Activated CD8-positive, alpha-beta T cell treated with anti-CD3 and anti-CD28 coated beads for 36 hours (primary cell): ENCODE measurements at regions of chr3 and their contacts with region 1.

Region 1: DNA sequence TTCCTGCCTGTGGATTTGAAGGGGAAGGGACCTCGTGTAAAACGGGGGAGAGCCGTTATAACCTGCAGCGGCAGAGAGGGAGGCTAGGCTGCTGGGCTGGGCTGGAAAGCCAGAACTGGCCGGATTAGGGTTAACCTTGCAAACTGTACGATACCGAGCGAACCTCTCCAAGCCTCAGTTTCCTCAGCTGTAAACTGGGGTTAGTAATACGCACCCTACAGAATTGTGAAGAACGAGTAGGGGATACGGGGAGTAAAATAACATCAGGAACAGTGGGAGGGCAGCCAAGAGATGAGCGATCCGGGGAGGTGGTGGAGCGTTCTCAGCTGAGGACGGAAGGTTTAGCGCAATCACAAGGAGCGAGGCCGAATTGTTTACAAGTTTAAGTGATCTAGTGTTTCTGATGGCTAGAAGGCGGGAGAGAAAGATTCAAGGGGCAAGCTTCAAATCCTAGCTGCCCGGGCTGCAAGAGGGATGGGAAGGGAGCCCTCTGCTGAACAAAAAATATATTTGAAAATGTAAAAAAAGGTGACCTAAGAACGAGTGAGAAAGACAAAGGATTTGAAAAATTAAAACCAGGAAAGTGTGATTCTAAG is 768 bp upstream of the SEMA5B start:
- DNase-seq: peak; percentile 30
- ATAC-seq: peak; percentile 52
- H3K4me3 Mint-ChIP-seq: peak overlapping the region; percentile 56
- H3K27ac Mint-ChIP-seq: no peak overlapping the region
- H3K4me1 Mint-ChIP-seq: peaks cover 13% of the 10 kb centered on the region
- H3K27me3 Mint-ChIP-seq: peaks cover 58% of the 10 kb centered on the region
- CTCF ChIP-seq: peak; percentile 58

Region 2: GRCh38 chr3:122572940-122573412 is 455.4 kb before region 1 on chr3:
- CTCF ChIA-PET with region 1: no interaction called
- POLR2A ChIA-PET with region 1: no interaction called
- intact Hi-C with region 1: no loop called
- DNase-seq: peak; percentile 58
- ATAC-seq: peak; percentile 49
- H3K4me3 Mint-ChIP-seq: no peak overlapping the region
- H3K27ac Mint-ChIP-seq: peak overlapping the region; percentile 77
- H3K4me1 Mint-ChIP-seq: peaks cover 66% of the 10 kb centered on the region
- H3K27me3 Mint-ChIP-seq: no peaks in the 10 kb centered on the region
- CTCF ChIP-seq: no peak

Region 3: GRCh38 chr3:122754929-122755328 is 273.4 kb before region 1 on chr3:
- CTCF ChIA-PET with region 1: interaction called, 24 read pairs
- POLR2A ChIA-PET with region 1: no interaction called
- intact Hi-C with region 1: loop called (anchors 10 kb)
- DNase-seq: peak; percentile 11
- ATAC-seq: peak; percentile 95
- H3K4me3 Mint-ChIP-seq: no peak overlapping the region
- H3K27ac Mint-ChIP-seq: no peak overlapping the region
- H3K4me1 Mint-ChIP-seq: peaks cover 2% of the 10 kb centered on the region
- H3K27me3 Mint-ChIP-seq: no peaks in the 10 kb centered on the region
- CTCF ChIP-seq: peak; percentile 83

Region 4: DNA sequence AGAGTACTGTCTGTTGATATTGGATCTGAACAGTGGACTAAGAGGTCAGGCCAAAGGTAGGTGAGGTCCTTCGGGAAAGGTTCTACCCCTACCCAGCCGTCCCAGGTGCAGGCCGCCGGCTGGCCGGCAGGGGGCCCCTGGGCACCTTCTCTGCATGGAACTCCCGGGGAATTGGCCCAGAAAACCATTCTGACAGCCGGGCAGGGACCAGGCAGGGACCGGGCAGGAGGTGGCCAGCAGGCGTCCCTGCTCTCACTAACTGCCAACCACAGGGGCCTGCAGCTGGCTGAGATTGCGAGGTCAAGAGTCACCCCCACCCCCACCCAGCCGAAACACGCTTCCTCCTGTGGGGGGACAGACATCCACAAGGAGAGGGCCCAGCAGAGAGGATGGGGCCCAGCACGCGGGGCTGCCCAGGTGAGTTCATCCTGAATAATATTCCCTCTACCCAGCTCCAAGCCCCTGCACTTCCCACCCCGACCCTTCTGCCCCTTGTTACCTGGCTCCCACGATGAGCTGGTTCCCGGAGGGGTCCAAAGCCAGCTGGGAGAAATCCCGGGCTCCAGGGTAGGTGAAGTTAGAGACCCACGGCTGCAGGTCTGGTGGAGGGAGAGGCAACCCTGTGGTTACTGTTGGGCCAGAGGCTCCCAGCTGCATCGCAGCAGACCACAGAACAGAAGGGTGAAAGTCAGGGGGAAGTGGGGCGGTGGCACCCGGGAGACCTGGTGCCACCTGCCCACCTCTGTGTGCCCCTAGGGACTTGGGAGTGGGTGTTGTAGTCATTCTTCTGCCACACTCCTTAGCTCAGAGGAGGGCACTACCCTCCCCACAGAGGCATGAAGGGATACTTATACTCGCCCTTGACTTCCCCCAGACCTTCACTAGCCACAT is 85.1 kb before region 1 on chr3:
- CTCF ChIA-PET with region 1: interaction called, 38 read pairs
- POLR2A ChIA-PET with region 1: no interaction called
- intact Hi-C with region 1: loop called (anchors 10 kb)
- DNase-seq: peak; percentile 50
- ATAC-seq: no peak
- H3K4me3 Mint-ChIP-seq: no peak overlapping the region
- H3K27ac Mint-ChIP-seq: no peak overlapping the region
- H3K4me1 Mint-ChIP-seq: peaks cover 9% of the 10 kb centered on the region
- H3K27me3 Mint-ChIP-seq: peaks cover 3% of the 10 kb centered on the region
- CTCF ChIP-seq: peak; percentile 70